ENCODE measurements at regions of chr1 and their contacts with region 1.

Region 1: GRCh38 chr1:204446370-204447111 is 34.9 kb upstream of the PPP1R15B start:
- DNase-seq: peak; percentile 75 to 95
- H3K4me3 ChIP-seq: no peak overlapping the region; a peak in 1 of 8 replicates
- H3K27ac ChIP-seq: no peak overlapping the region
- H3K4me1 ChIP-seq: peaks cover 0 to 13% (median 7%) of the 10 kb centered on the region in 4 experiments; a peak in 6 of 7 replicates
- H3K27me3 ChIP-seq: no peaks in the 10 kb centered on the region
- CTCF ChIP-seq: peak; percentile 88 to 97 (median 93)
- EP300 ChIP-seq: no peak
- POLR2A ChIP-seq: no peak
- RAD21 ChIP-seq: peak; percentile 90 to 97

Region 2: DNA sequence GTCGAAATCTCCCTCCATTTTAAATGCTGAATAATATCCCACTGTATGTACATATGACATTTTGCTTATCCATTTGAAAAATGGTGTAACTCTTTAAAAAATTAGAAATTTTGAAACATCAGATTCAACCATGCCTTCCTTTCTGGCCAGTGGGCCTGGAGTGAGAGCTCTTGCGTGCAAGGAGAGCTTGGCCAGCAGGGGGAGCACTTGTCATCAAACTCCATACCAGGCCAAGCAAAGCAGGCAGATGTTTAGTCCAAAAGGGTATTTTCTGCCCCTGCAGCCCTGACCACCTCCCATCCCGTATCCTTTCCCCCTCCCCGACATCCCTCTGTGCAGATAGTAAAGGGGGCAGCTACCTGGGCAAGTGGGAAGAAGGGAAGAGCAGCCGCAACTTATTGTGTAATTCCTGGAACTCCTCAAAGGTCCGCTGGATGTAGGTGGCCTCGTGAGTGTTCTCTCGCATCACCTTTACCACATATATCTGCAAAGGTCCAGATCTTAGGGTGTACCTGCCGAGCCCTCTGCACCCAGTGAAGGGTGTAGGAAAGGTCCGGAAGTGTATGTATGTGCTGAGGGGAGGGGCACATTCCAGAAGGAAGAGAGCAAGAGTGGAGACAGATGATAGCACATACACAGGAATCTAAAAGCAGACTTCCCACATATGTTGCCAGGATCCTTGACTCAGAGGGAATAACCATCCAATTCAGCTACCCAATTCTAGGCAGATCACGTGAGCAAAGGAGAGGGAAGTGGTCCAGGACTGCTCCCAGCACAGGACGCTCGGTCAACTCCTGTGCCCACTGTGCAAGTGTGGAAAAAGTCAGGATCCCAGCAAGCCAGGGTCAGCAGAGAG is 15.0 kb before region 1 on chr1:
- CTCF ChIA-PET with region 1: interaction called, 310 read pairs
- POLR2A ChIA-PET with region 1: interaction called, 3 read pairs
- DNase-seq: peak; percentile 62 to 96
- H3K4me3 ChIP-seq: no peak overlapping the region
- H3K27ac ChIP-seq: no peak overlapping the region
- H3K4me1 ChIP-seq: 0 out of 7 replicates have a peak, but pooled peaks cover 0 to 2% (median 0%) of the 10 kb centered on the region in 4 experiments
- H3K27me3 ChIP-seq: no peaks in the 10 kb centered on the region
- CTCF ChIP-seq: peak; percentile 84 to 95 (median 91)
- EP300 ChIP-seq: no peak
- POLR2A ChIP-seq: no peak
- RAD21 ChIP-seq: peak; percentile 61 to 68

Region 3: DNA sequence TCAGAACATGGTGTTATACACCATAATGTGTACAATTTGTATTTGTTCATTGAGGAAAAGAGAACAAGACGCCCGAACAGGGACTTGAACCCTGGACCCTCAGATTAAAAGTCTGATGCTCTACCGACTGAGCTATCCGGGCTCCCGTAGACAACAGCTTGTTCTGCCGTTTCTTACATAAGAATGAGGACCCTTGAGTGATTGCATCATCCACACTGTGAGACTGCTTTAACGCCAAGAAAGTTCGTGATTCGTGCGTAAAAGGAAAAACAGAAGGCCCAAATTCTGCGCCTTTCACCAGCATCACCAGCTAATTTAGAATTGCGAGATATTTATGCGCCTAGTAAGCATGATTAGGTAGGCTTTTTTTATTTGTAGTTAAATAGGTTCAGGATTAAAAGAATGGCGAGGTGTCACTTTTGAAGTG is 60.4 kb after region 1 on chr1:
- CTCF ChIA-PET with region 1: interaction called, 2,124 read pairs
- POLR2A ChIA-PET with region 1: interaction called, 21 read pairs
- DNase-seq: peak; percentile 71 to 99
- H3K4me3 ChIP-seq: peak overlapping the region; percentile 80 to 90 (median 88)
- H3K27ac ChIP-seq: peak overlapping the region; percentile 82
- H3K4me1 ChIP-seq: peaks cover 0 to 2% (median 0%) of the 10 kb centered on the region in 4 experiments; a peak in 1 of 7 replicates
- H3K27me3 ChIP-seq: no peaks in the 10 kb centered on the region
- CTCF ChIP-seq: no peak
- EP300 ChIP-seq: no peak
- POLR2A ChIP-seq: peak in 1 of 2 experiments; percentile 28; a peak in 2 of 3 replicates
- RAD21 ChIP-seq: no peak

Measured in H1 (cell line).